ENCODE measurements at regions of chr3 and their contacts with region 1.

Region 1: GRCh38 chr3:156576651-156577343 is 21.9 kb upstream of the SSR3 start:
- DNase-seq: peak in 1 of 2 experiments; percentile 35
- H3K4me3 ChIP-seq: no peak overlapping the region
- H3K4me3 Mint-ChIP-seq: no peak overlapping the region
- H3K27ac Mint-ChIP-seq: no peak overlapping the region
- H3K4me1 ChIP-seq: 0 out of 2 replicates have a peak, but pooled peaks cover 4% of the 10 kb centered on the region
- H3K4me1 Mint-ChIP-seq: no peaks in the 10 kb centered on the region
- H3K27me3 ChIP-seq: no peaks in the 10 kb centered on the region
- H3K27me3 Mint-ChIP-seq: peaks cover 11% of the 10 kb centered on the region
- CTCF ChIP-seq: peak in 1 of 2 experiments; percentile 9

Region 2: DNA sequence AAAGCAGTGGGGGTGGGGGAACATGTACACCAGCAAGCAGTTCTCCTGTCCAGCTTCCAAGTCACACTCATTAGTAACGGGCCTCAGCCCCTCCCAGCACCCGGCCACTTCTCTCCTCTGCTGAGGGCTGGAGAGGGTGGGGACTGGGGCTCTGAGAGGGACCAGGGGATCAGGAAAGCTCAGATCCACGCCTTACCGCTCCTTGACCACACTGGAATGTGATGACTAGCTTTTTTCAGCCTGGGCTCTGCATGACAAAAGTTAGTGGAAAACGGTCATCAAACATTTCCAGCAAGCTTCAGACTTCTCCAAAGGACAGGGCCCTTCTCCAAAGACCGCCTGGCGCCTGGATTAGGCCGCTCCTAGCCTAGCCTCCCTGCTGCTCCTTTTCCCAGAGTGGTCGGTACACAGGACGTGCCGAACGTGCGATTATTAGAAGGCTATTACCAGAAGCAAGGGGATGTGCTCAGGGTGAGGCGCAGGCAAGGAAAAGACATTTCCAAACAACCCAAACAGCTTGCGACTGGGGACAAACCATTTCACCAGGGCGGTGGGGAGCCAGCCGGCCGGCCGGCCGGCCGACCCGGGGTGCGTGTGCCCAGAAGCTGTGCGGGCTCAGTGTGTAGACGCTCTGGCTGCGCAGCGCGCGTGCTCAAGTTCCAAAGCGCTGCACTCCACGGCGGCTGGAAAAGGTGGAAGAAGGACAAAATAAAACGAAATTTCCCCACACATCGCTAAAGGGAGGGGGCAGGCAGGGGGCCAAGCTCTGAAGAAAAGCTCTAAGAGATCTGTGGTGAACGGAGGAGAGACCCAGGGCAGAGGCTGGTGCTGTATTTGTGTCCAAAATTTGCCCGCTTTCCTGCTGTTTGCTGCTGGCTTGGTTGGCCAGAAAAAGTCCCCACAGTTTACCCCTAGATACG is 29.1 kb after region 1 on chr3:
- CTCF ChIA-PET with region 1: no interaction called
- POLR2A ChIA-PET with region 1: no interaction called
- intact Hi-C with region 1: loop called (anchors 2 kb)
- DNase-seq: peak; percentile 37 to 57
- H3K4me3 ChIP-seq: peak overlapping the region; percentile 47
- H3K4me3 Mint-ChIP-seq: peak overlapping the region; percentile 80
- H3K27ac Mint-ChIP-seq: peak overlapping the region; percentile 43
- H3K4me1 ChIP-seq: peaks cover 15% of the 10 kb centered on the region
- H3K4me1 Mint-ChIP-seq: peaks cover 6% of the 10 kb centered on the region
- H3K27me3 ChIP-seq: no peaks in the 10 kb centered on the region
- H3K27me3 Mint-ChIP-seq: no peaks in the 10 kb centered on the region
- CTCF ChIP-seq: no peak

Region 3: DNA sequence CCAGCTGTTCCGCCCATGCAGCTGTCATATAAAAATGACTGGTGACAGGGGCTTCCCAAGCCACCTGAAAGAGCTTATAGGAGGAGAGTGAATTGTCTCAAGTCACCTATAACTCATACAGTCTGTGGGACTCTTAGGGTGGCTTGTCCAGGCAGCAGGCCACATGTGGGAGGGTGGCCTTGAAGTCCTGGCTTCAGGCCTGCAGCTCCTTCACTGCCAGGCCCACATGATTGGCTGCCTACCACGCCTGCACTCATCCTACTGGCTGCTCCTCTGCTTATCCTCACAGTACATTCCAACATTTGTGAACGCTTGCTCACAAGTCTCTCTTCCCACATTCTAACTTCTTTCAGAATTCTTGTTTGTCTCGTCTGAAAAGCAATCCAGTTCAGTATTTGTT is 56.5 kb after region 1 on chr3:
- CTCF ChIA-PET with region 1: no interaction called
- POLR2A ChIA-PET with region 1: no interaction called
- intact Hi-C with region 1: no loop called
- DNase-seq: no peak
- H3K4me3 ChIP-seq: no peak overlapping the region
- H3K4me3 Mint-ChIP-seq: no peak overlapping the region
- H3K27ac Mint-ChIP-seq: no peak overlapping the region
- H3K4me1 ChIP-seq: peaks cover 27% of the 10 kb centered on the region
- H3K4me1 Mint-ChIP-seq: peaks cover 6% of the 10 kb centered on the region
- H3K27me3 ChIP-seq: no peaks in the 10 kb centered on the region
- H3K27me3 Mint-ChIP-seq: no peaks in the 10 kb centered on the region
- CTCF ChIP-seq: no peak

Measured in Caco-2 (cell line).